Ovary (tissue), 10 donors: ENCODE measurements at regions of chr12 and their contacts with region 1.

Region 1: GRCh38 chr12:28909291-28909690 is 239.8 kb upstream of the FAR2 start:
- DNase-seq: no peak
- H3K4me3 ChIP-seq: no peak overlapping the region
- H3K27ac ChIP-seq: no peak overlapping the region
- H3K4me1 ChIP-seq: no peaks in the 10 kb centered on the region
- H3K27me3 ChIP-seq: no peaks in the 10 kb centered on the region
- CTCF ChIP-seq: no peak
- EP300 ChIP-seq: no peak
- POLR2A ChIP-seq: no peak

Region 2: GRCh38 chr12:27969624-27970400 is 939.5 kb before region 1 on chr12:
- intact Hi-C with region 1: loop called in 1 of 4 experiments (anchors 5 kb)
- DNase-seq: peak in 4 of 5 donors; percentile 18 to 47 (median 38)
- H3K4me3 ChIP-seq: peak overlapping the region; percentile 40
- H3K27ac ChIP-seq: peak overlapping the region in 1 of 2 donors; percentile 21
- H3K4me1 ChIP-seq: peaks cover 1% of the 10 kb centered on the region
- H3K27me3 ChIP-seq: no peaks in the 10 kb centered on the region
- CTCF ChIP-seq: no peak
- EP300 ChIP-seq: no peak
- POLR2A ChIP-seq: no peak